Ovary (tissue), 10 donors: ENCODE measurements at regions of chr4 and their contacts with region 1.

Region 1: DNA sequence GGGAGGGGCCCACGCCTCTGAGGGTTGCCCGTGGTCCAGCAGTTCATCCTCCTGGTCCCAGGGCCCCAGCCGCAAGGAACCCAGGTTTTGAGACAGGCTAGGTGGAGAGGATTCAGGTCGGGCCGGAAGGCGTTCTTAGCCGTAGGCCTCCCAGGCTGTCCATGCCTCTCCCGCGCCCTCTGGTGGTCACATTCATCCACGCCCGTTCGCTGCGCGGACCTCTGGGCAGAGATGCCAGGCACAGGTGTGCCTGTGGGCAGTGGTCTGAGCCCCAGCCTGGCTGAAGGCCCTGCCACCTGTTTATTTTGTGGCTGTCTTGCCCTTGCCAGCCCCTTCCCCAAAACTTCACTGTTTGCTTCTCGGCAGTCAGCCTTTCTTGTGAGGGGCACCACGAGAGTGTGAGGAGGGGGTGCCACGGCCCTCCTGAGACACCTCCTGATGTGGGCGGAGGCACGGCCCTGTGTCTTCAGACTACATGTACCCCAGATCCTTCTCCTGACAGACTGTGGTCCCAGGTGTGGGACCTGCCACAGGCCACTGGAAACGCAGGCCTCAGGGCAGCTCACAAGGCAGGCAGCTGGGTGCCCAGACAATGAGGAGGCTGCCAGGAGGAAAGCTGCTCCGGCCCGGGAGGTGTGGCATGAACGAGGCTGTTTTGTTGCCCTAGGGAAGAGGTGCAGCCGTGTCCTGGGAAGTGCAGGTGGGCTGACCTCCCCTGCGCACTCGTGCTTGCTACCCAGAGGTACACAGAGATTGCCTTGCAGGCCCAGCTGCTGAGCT is 5.0 kb downstream of the UVSSA start:
- DNase-seq: peak; percentile 80 to 91 (median 88)
- H3K4me3 ChIP-seq: no peak overlapping the region
- H3K27ac ChIP-seq: no peak overlapping the region
- H3K4me1 ChIP-seq: no peaks in the 10 kb centered on the region
- H3K27me3 ChIP-seq: no peaks in the 10 kb centered on the region
- CTCF ChIP-seq: peak; percentile 90 to 93 (median 92)
- EP300 ChIP-seq: no peak
- POLR2A ChIP-seq: no peak

Region 2: DNA sequence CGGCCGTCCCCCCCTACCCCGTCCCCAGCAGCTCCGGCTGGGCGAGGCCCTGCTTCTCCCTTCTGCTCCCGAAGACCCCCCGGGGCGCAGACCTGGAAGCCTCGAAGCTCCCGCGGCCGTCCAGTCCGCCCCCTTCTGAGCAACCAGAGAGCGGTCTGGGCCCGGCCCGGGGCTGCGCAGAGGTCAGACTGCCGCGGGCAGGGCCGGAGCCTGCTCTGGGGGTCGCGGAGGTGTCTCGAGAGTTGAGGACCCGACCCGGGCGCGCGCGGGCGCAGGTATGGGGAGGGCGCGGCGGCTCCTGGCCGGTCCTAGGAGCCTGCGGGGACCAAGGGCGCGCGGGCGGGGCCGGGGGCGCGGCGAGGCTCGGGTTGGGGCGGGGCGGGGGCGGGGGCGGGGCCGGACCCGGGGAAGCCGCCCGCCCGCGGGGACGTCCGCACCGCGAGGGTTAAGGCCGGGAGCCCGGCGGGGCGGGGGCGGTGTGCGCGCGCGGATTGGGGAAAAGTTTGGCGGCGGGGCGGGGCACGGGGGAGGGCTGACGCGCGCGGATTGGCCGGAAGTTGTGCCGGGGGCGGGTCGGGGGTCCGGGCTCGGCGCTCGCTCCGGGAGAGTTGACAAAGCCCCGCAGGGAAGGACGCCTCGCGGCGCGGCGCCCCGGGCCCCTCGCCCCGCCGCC is 340.9 kb before region 1 on chr4 and contains the start of gene FGFRL1:
- intact Hi-C with region 1: loop called in 1 of 4 experiments (anchors 5 kb)
- DNase-seq: peak; percentile 94 to 96 (median 95)
- H3K4me3 ChIP-seq: peak within 1 kb of the TSS; percentile 62
- H3K27ac ChIP-seq: peak within 1 kb of the TSS; percentile 34 to 66
- H3K4me1 ChIP-seq: peaks cover 14% of the 10 kb centered on the region
- H3K27me3 ChIP-seq: no peaks in the 10 kb centered on the region
- CTCF ChIP-seq: no peak
- EP300 ChIP-seq: no peak
- POLR2A ChIP-seq: no peak
- total RNA-seq, gene FGFRL1: 23.4 to 59.1 (median 40.2) TPM

Region 3: DNA sequence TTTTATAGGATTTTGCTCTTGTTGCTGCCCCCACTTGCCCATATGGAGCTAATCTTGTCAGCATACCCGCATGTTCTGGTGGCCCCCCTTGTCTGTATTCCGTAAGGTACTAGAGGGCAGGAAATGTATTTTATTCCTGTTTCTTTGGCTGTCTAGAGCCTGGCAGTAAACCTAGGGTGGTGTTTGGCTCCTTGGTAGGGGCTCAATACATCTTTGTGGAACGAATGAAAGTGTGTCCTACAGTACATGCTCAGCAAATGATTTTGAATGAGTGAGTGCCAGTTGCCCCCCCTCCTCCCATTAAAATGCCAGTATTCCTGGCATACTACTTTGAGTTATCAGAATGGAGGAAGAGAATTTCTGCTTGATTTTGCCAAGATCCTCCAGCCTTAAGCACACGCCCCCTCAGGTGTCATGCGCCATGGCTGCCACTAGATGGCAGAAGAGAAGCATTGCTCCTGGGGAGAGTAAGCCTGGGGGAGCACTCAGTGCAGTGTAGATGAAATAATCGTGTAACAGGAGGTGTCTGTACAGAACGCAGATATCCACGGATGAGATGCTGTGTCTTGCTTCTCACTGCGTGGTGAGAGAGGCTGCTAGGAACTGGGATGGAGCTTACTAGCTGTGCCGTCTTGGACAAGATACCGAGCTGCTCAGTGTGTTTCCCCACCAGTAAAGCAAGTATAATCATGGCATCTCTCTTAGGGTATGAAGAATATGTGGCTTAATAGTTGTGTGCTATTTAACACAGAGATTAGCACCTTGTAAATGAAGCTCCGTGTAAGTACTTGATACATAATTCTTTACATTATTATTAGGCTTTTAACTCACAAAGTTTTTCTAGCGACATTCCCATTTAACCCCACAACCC is 221.5 kb before region 1 on chr4:
- intact Hi-C with region 1: loop called in 3 of 4 experiments (anchors 2 to 5 kb)
- DNase-seq: peak; percentile 56 to 83 (median 75)
- H3K4me3 ChIP-seq: no peak overlapping the region
- H3K27ac ChIP-seq: no peak overlapping the region
- H3K4me1 ChIP-seq: no peaks in the 10 kb centered on the region
- H3K27me3 ChIP-seq: no peaks in the 10 kb centered on the region
- CTCF ChIP-seq: peak; percentile 86 to 93 (median 90)
- EP300 ChIP-seq: no peak
- POLR2A ChIP-seq: peak; percentile 13

Region 4: GRCh38 chr4:1296324-1297022 is 55.6 kb before region 1 on chr4:
- intact Hi-C with region 1: no loop called
- DNase-seq: no peak
- H3K4me3 ChIP-seq: no peak overlapping the region
- H3K27ac ChIP-seq: no peak overlapping the region
- H3K4me1 ChIP-seq: peaks cover 25% of the 10 kb centered on the region
- H3K27me3 ChIP-seq: no peaks in the 10 kb centered on the region
- CTCF ChIP-seq: no peak
- EP300 ChIP-seq: no peak
- POLR2A ChIP-seq: no peak

Region 5: GRCh38 chr4:1503583-1504501 is 151.8 kb after region 1 on chr4:
- intact Hi-C with region 1: no loop called
- DNase-seq: peak in 3 of 5 donors; percentile 4 to 23 (median 14)
- H3K4me3 ChIP-seq: no peak overlapping the region
- H3K27ac ChIP-seq: no peak overlapping the region
- H3K4me1 ChIP-seq: no peaks in the 10 kb centered on the region
- H3K27me3 ChIP-seq: no peaks in the 10 kb centered on the region
- CTCF ChIP-seq: no peak
- EP300 ChIP-seq: no peak
- POLR2A ChIP-seq: no peak

Region 6: DNA sequence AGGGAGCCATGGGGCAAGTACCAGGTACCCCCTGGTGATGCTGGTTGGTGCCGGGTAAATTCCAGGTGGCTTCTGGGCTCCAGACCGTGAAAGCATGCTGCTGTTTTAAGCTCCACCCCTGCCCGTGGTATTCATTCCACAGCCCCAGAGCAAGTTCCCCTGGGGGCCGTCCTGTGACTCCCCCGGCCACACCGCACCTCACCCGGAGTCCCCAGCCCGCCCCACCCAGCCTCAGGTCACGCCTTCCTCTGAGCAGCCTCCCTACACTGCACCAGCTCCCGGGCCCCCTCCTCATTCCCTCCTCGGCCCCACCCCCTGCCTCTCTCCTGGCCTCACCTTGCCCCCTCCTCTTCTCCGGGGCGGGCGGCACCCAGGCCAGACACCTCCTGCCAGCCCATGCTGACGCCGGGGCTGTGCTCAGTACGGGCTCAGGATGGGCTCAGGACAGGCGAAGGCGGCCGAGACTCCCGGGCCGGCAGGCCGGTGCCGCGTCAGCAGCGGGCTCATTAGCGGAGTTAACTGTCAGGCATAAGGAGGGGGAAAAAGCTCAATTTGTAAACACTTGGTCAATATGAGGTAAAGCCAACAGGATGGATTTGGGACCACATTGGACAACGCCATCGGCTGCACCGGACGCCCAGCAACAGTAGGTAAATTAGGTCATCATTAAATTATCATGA is 204.6 kb after region 1 on chr4:
- intact Hi-C with region 1: loop called in 2 of 4 experiments (anchors 5 to 10 kb)
- DNase-seq: no peak
- H3K4me3 ChIP-seq: no peak overlapping the region
- H3K27ac ChIP-seq: no peak overlapping the region
- H3K4me1 ChIP-seq: no peaks in the 10 kb centered on the region
- H3K27me3 ChIP-seq: no peaks in the 10 kb centered on the region
- CTCF ChIP-seq: no peak
- EP300 ChIP-seq: no peak
- POLR2A ChIP-seq: no peak

Region 7: GRCh38 chr4:1592709-1593417 is 240.8 kb after region 1 on chr4:
- intact Hi-C with region 1: no loop called
- DNase-seq: peak in 2 of 5 donors; percentile 14 to 28
- H3K4me3 ChIP-seq: no peak overlapping the region
- H3K27ac ChIP-seq: no peak overlapping the region
- H3K4me1 ChIP-seq: no peaks in the 10 kb centered on the region
- H3K27me3 ChIP-seq: no peaks in the 10 kb centered on the region
- CTCF ChIP-seq: no peak
- EP300 ChIP-seq: no peak
- POLR2A ChIP-seq: no peak

Region 8: GRCh38 chr4:1628892-1629698 is 277.1 kb after region 1 on chr4:
- intact Hi-C with region 1: loop called in 2 of 4 experiments (anchors 2 to 5 kb)
- DNase-seq: peak; percentile 50 to 79 (median 71)
- H3K4me3 ChIP-seq: no peak overlapping the region
- H3K27ac ChIP-seq: no peak overlapping the region
- H3K4me1 ChIP-seq: no peaks in the 10 kb centered on the region
- H3K27me3 ChIP-seq: no peaks in the 10 kb centered on the region
- CTCF ChIP-seq: peak; percentile 88 to 90 (median 89)
- EP300 ChIP-seq: no peak
- POLR2A ChIP-seq: no peak

Region 9: GRCh38 chr4:1726146-1726934 is 374.3 kb after region 1 on chr4:
- intact Hi-C with region 1: loop called in 3 of 4 experiments (anchors 5 kb)
- DNase-seq: peak; percentile 64 to 88 (median 84)
- H3K4me3 ChIP-seq: no peak overlapping the region
- H3K27ac ChIP-seq: no peak overlapping the region
- H3K4me1 ChIP-seq: peaks cover 2% of the 10 kb centered on the region
- H3K27me3 ChIP-seq: no peaks in the 10 kb centered on the region
- CTCF ChIP-seq: peak; percentile 77 to 80 (median 78)
- EP300 ChIP-seq: no peak
- POLR2A ChIP-seq: no peak